Activated CD4-positive, alpha-beta memory T cell treated with anti-CD3 and anti-CD28 coated beads, Interleukin-2, amount 10 ng/mL, durations not matched to agents 7 days and 5 days (primary cell): ENCODE measurements at regions of chr11 and their contacts with region 1.

Region 1: GRCh38 chr11:102940714-102941588 is 14.6 kb downstream of the MMP13 start:
- DNase-seq: peak; percentile 34
- H3K4me3 Mint-ChIP-seq: no peak overlapping the region
- H3K27ac Mint-ChIP-seq: no peak overlapping the region
- H3K4me1 Mint-ChIP-seq: no peaks in the 10 kb centered on the region
- H3K27me3 Mint-ChIP-seq: peaks cover 8% of the 10 kb centered on the region

Region 2: GRCh38 chr11:102522312-102523188 is 418.4 kb before region 1 on chr11:
- CTCF ChIA-PET with region 1: no interaction called
- POLR2A ChIA-PET with region 1: no interaction called
- DNase-seq: no peak
- H3K4me3 Mint-ChIP-seq: no peak overlapping the region
- H3K27ac Mint-ChIP-seq: no peak overlapping the region
- H3K4me1 Mint-ChIP-seq: peaks cover 4% of the 10 kb centered on the region
- H3K27me3 Mint-ChIP-seq: peaks cover 16% of the 10 kb centered on the region

Region 3: DNA sequence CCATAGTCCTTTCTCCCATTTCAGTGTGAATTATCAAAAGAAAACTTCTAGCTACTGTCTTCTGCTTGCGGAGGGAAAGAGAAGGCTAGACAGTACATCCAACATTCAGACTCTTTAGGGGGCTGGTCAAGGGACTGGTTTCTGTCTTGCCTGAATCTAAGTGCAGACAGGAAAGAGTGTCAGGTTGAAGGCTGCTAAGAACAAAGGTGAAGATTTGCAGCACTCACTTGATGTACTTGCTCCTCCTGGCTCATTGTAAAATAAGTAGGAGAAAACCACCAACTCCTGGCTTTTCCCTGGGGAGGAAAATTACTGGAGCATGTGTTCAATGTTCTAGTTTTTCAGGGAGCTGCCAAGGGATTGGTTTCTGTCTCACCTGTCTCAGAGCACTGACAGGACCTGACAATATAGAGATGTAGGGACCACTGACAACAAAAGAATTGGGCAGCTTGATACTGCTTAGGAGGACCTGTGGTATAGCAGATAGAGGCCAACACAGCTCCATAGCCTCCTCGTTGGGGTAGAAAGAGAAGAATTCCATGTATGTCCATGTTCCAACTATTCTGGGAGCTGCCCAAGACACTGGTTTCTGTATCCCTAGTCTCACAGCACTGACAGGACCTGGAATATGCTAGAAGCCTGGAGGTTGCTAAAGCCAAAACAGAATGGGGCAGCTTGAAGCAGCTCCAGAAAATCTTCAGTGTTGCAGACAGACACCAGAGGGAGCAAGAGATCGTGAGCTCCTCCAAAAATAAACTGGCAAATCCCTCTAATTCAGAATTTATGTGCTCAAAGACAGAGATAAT is 26.5 kb before region 1 on chr11:
- CTCF ChIA-PET with region 1: interaction called, 15 read pairs
- POLR2A ChIA-PET with region 1: no interaction called
- DNase-seq: no peak
- H3K4me3 Mint-ChIP-seq: no peak overlapping the region
- H3K27ac Mint-ChIP-seq: no peak overlapping the region
- H3K4me1 Mint-ChIP-seq: no peaks in the 10 kb centered on the region
- H3K27me3 Mint-ChIP-seq: peaks cover 1% of the 10 kb centered on the region